ENCODE measurements at regions of chr2 and their contacts with region 1.

Region 1: DNA sequence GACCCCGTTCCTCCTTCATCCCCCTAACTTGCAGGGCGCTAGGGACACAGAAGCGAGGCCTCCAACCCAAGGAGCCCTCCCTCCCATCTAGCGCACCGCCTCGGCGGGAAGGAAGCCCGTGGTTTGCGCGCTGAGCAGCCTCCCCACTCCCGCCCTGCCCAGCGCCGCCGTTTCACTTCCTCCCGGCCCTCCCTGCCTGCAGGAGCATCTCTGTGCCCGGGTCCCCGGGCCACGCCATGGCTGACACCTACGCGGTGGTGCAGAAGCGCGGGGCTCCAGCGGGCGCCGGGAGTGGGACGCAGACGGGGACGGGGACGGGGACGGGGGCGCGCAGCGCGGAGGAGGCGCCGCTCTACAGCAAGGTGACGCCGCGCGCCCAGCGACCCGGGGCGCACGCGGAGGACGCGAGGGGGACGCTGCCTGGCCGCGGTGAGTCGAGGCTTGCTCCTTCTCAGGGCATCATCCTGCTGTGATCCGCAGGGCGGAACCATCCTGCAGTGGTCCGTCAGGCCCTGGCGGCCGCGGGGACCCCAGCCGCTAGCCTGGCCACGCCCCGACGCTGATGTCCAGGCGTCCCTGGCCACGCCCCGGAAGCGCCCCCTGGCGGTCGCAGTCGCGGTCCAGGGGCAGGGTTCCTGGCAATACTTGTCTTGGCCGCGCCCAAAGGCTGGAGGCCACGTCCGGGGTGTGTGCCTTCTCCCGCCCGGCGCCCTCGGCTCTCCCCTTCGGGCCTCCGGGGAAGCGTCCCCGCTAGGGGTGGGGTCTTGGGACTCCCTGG is 16.4 kb downstream of the PTPN18 start:
- DNase-seq: peak; percentile 94
- H3K4me3 Mint-ChIP-seq: peak overlapping the region; percentile 97
- H3K27ac Mint-ChIP-seq: peak overlapping the region; percentile 97
- H3K4me1 Mint-ChIP-seq: peaks cover 56% of the 10 kb centered on the region
- H3K27me3 Mint-ChIP-seq: no peaks in the 10 kb centered on the region

Region 2: GRCh38 chr2:130135692-130136541 is 236.3 kb before region 1 on chr2:
- intact Hi-C with region 1: no loop called
- DNase-seq: no peak
- H3K4me3 Mint-ChIP-seq: no peak overlapping the region
- H3K27ac Mint-ChIP-seq: no peak overlapping the region
- H3K4me1 Mint-ChIP-seq: no peaks in the 10 kb centered on the region
- H3K27me3 Mint-ChIP-seq: peaks cover 3% of the 10 kb centered on the region

Region 3: GRCh38 chr2:130181325-130181879 is 190.8 kb before region 1 on chr2 and contains the start of gene SMPD4:
- intact Hi-C with region 1: loop called (anchors 1 kb)
- DNase-seq: peak; percentile 99
- H3K4me3 Mint-ChIP-seq: peak within 1 kb of the TSS; percentile 93
- H3K27ac Mint-ChIP-seq: peak within 1 kb of the TSS; percentile 96
- H3K4me1 Mint-ChIP-seq: peaks cover 7% of the 10 kb centered on the region
- H3K27me3 Mint-ChIP-seq: no peaks in the 10 kb centered on the region
- total RNA-seq, gene SMPD4: 86.0 and 91.1 TPM in 2 replicates

Region 4: DNA sequence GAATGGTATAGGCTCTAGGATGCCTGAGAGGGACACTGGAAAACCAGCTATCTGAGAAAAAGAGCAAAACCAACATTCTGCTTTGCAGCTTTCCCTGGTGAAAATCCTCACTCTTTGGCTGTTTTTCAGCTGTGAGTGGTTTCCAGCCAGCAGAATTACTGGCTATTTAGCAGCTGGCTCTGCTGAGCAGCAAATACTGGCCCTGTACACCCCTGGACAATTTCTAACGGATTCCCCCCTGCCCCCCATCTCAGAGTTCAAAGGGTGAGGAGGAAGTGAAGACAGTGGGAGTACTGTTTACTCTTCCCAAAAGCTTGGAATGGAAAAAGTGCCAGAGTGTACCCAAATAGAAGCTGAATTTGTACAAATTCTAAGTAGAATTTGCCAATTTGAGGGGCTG is 55.6 kb before region 1 on chr2:
- intact Hi-C with region 1: no loop called
- DNase-seq: peak; percentile 28
- H3K4me3 Mint-ChIP-seq: no peak overlapping the region
- H3K27ac Mint-ChIP-seq: no peak overlapping the region
- H3K4me1 Mint-ChIP-seq: no peaks in the 10 kb centered on the region
- H3K27me3 Mint-ChIP-seq: peaks cover 7% of the 10 kb centered on the region

Region 5: GRCh38 chr2:130342533-130343275 is 29.5 kb before region 1 on chr2 and contains the start of gene IMP4:
- intact Hi-C with region 1: loop called (anchors 1 kb)
- DNase-seq: peak; percentile 99
- H3K4me3 Mint-ChIP-seq: peak within 1 kb of the TSS; percentile 97
- H3K27ac Mint-ChIP-seq: peak within 1 kb of the TSS; percentile 97
- H3K4me1 Mint-ChIP-seq: peaks cover 24% of the 10 kb centered on the region
- H3K27me3 Mint-ChIP-seq: no peaks in the 10 kb centered on the region
- total RNA-seq, gene IMP4: 177 and 178 TPM in 2 replicates

Region 6: GRCh38 chr2:130355578-130356431 is 16.4 kb before region 1 on chr2 and contains the start of gene PTPN18:
- intact Hi-C with region 1: loop called (anchors 1 kb)
- DNase-seq: peak; percentile 91
- H3K4me3 Mint-ChIP-seq: peak within 1 kb of the TSS; percentile 86
- H3K27ac Mint-ChIP-seq: peak within 1 kb of the TSS; percentile 15
- H3K4me1 Mint-ChIP-seq: peaks cover 12% of the 10 kb centered on the region
- H3K27me3 Mint-ChIP-seq: no peaks in the 10 kb centered on the region
- total RNA-seq, gene PTPN18: 61.7 and 61.9 TPM in 2 replicates

Region 7: GRCh38 chr2:130391058-130391871 is 19.0 kb after region 1 on chr2:
- intact Hi-C with region 1: loop called (anchors 2 kb)
- DNase-seq: peak; percentile 92
- H3K4me3 Mint-ChIP-seq: peak overlapping the region; percentile 90
- H3K27ac Mint-ChIP-seq: peak overlapping the region; percentile 88
- H3K4me1 Mint-ChIP-seq: peaks cover 11% of the 10 kb centered on the region
- H3K27me3 Mint-ChIP-seq: peaks cover 3% of the 10 kb centered on the region

Region 8: GRCh38 chr2:131105156-131105949 is 733.1 kb after region 1 on chr2 and contains the start of gene PLEKHB2:
- intact Hi-C with region 1: loop called (anchors 5 kb)
- DNase-seq: peak; percentile 99
- H3K4me3 Mint-ChIP-seq: peak within 1 kb of the TSS; percentile 92
- H3K27ac Mint-ChIP-seq: peak within 1 kb of the TSS; percentile 95
- H3K4me1 Mint-ChIP-seq: peaks cover 44% of the 10 kb centered on the region
- H3K27me3 Mint-ChIP-seq: no peaks in the 10 kb centered on the region
- total RNA-seq, gene PLEKHB2: 62.4 and 66.7 TPM in 2 replicates

Measured in activated CD4-positive, alpha-beta T cell treated with anti-CD3 and anti-CD28 coated beads, Interleukin-2, amount 10 ng/mL, durations not matched to agents 24 days and 14 days (primary cell).